Right ventricle myocardium inferior (tissue), 1 donor: ENCODE measurements at regions of chr16 and their contacts with region 1.

Region 1: GRCh38 chr16:3503523-3503922 is 2.7 kb downstream of the CLUAP1 start:
- DNase-seq: no peak
- ATAC-seq: no peak

Region 2: GRCh38 chr16:3150346-3151218 is 352.9 kb before region 1 on chr16:
- intact Hi-C with region 1: loop called (anchors 2 kb)
- DNase-seq: peak; percentile 96
- ATAC-seq: peak; percentile 94

Region 3: DNA sequence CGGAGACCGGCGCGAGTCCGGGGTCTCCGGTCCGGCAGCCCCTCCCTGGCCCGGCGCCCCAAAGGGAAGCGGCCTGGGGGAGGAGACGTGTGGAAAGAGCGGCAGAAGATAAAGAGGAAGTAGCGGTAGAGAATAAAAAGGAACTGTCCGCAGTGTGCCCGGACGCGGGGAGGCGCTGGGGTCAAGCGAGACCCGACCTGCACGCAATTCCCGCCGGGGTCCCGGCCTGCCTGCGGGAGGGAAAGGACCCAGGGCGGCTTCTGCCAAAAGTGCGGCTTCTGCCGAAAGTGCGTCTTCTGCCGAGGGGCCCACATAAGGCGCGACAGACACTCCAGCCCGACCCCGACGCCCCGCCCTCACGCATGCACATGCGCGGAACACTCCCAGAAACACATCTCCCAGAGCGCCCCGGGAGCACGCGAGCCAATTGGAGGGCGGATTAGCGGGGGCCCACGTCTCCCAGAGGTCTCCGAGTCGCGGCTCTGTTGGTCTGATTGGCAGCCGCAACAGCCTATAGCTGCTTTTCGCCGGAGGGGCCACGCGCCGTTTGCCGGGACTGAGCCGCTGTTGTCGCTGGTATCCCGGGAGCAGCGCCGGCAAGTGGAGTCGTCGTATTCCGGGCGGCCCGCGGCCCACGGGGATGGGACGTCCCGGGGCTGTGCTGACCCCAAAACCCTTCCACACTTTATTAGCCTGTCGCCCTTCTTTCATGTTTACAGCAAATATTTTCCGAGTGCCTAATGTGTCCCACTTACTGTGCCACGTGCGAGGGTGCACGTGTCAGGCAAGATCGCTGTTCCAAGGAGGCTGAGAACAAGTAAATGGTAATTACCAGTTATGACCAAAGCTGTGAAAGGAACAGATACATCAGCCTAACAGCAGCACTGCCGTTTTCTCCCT is 239.1 kb before region 1 on chr16:
- intact Hi-C with region 1: loop called (anchors 5 kb)
- DNase-seq: peak; percentile 97
- ATAC-seq: peak; percentile 95

Region 4: GRCh38 chr16:3457434-3458252 is 45.9 kb before region 1 on chr16:
- intact Hi-C with region 1: loop called (anchors 1 kb)
- DNase-seq: peak; percentile 96
- ATAC-seq: peak; percentile 92